ENCODE measurements at regions of chr22 and their contacts with region 1.

Region 1: GRCh38 chr22:24938741-24939341 is 7.7 kb downstream of the LHFPL7 start:
- DNase-seq: no peak
- ATAC-seq: peak; percentile 42 to 70
- H3K4me3 ChIP-seq: no peak overlapping the region
- H3K27ac ChIP-seq: no peak overlapping the region
- H3K4me1 ChIP-seq: no peaks in the 10 kb centered on the region
- H3K27me3 ChIP-seq: no peaks in the 10 kb centered on the region
- CTCF ChIP-seq: peak; percentile 47 to 71 (median 65)
- POLR2A ChIP-seq: no peak

Region 2: DNA sequence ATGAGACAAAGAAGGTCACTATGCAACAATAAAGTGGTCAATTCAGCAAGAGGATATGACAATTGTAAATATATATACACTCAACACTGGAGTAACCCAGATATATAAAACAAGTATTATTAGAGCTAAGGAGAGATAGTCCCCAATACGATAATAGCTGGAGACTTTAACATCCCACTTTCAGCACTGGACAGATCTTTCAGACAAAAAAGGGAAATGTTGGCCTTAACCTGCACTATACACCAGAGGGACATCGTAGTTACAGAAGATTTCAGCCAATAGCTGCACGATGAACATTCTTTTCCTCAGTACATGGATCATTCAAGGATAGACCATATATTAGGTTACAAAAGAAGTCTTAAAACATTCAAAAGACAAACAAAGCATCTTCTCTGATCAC is 194.2 kb before region 1 on chr22:
- in situ Hi-C with region 1: no loop called
- intact Hi-C with region 1: no loop called
- DNase-seq: no peak
- ATAC-seq: no peak
- H3K4me3 ChIP-seq: no peak overlapping the region
- H3K27ac ChIP-seq: no peak overlapping the region
- H3K4me1 ChIP-seq: no peaks in the 10 kb centered on the region
- H3K27me3 ChIP-seq: peaks cover 0 to 2% (median 0%) of the 10 kb centered on the region in 3 donors
- CTCF ChIP-seq: no peak
- POLR2A ChIP-seq: no peak

Region 3: GRCh38 chr22:24758164-24758799 is 180.6 kb before region 1 on chr22:
- in situ Hi-C with region 1: no loop called
- intact Hi-C with region 1: no loop called
- DNase-seq: no peak
- ATAC-seq: no peak
- H3K4me3 ChIP-seq: no peak overlapping the region
- H3K27ac ChIP-seq: no peak overlapping the region
- H3K4me1 ChIP-seq: no peaks in the 10 kb centered on the region
- H3K27me3 ChIP-seq: peaks cover 0 to 4% (median 3%) of the 10 kb centered on the region in 3 donors
- CTCF ChIP-seq: peak; percentile 66 to 86 (median 72)
- POLR2A ChIP-seq: no peak

Region 4: GRCh38 chr22:24875862-24876506 is 62.9 kb before region 1 on chr22:
- in situ Hi-C with region 1: no loop called
- intact Hi-C with region 1: no loop called
- DNase-seq: no peak
- ATAC-seq: no peak
- H3K4me3 ChIP-seq: no peak overlapping the region
- H3K27ac ChIP-seq: no peak overlapping the region
- H3K4me1 ChIP-seq: no peaks in the 10 kb centered on the region
- H3K27me3 ChIP-seq: no peaks in the 10 kb centered on the region
- CTCF ChIP-seq: no peak
- POLR2A ChIP-seq: no peak

Region 5: DNA sequence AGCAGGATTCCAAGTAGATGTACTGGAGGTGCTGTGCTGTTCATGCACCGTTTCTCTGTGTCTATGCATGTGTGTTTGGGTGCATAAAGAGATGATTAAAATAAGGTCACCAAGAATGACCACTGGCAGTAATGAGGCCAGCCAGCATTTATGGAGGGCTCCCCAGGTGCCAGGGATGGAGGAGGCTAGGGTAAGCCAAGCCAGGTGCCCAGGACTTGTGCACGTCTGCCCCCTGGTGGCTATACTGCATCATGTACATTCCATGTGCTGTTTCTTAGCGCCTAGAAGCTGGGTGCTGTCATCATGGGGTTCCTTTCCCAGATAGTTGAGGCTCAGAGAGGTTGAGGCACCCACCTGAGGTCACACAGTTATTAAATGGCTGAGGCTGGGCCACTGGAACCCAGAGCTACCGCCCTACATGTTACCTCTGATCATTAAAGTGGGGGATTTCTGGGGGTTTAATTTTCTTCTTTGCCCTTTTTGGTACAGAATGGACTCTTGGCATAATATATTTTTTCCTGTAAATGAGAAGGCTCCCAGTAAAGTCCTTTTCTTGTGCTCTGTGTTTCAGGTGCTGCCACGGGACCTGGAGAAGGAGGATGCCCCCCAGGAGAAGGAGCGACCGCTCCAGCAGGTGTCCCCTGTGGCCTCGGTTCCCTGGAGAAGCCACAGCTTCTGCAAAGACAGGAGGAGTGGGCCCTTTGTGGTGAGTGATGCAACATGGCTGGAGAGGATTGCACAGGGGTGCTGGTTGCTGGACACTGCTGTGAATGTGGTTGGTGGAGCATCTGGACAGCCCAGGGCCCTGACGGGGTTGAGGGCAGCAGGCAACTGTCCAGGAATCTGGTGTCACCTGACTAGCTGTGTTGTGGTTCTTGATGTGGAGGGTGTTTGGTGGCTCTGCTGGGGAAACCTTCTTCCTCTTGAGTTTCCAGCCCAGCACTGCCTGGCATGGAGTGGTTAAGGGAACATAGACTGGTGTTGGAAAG is 110.1 kb after region 1 on chr22:
- in situ Hi-C with region 1: no loop called
- intact Hi-C with region 1: loop called (anchors 5 kb)
- DNase-seq: peak; percentile 27 to 46
- ATAC-seq: peak; percentile 71 to 84
- H3K4me3 ChIP-seq: no peak overlapping the region
- H3K27ac ChIP-seq: no peak overlapping the region
- H3K4me1 ChIP-seq: no peaks in the 10 kb centered on the region
- H3K27me3 ChIP-seq: no peaks in the 10 kb centered on the region
- CTCF ChIP-seq: peak; percentile 81 to 86 (median 84)
- POLR2A ChIP-seq: no peak

Region 6: DNA sequence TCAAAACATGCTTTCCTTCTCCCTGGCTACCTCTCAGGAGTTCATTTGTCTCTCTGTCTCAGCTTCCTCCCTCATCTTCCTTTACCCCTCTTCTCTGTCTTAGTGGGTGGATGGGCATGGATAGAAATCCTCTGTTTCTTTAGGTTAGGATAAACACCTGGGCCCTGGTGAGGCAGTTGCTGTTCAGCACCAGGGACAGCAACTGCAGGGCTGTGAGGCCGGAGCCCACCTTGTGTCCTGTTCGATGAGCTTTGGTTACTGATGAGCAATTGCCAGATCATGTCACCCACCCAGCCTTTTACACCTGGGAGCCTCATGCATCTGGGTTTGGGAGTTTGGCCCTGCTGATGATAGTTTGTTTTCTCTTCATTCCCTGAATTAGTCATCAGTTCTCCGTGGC is 254.7 kb after region 1 on chr22:
- in situ Hi-C with region 1: loop called in 1 of 4 experiments (anchors 25 kb)
- intact Hi-C with region 1: no loop called
- DNase-seq: no peak
- ATAC-seq: no peak
- H3K4me3 ChIP-seq: no peak overlapping the region
- H3K27ac ChIP-seq: no peak overlapping the region
- H3K4me1 ChIP-seq: no peaks in the 10 kb centered on the region
- H3K27me3 ChIP-seq: no peaks in the 10 kb centered on the region
- CTCF ChIP-seq: no peak
- POLR2A ChIP-seq: no peak